IMR-90 (cell line): ENCODE measurements at regions of chr6 and their contacts with region 1.

Region 1: DNA sequence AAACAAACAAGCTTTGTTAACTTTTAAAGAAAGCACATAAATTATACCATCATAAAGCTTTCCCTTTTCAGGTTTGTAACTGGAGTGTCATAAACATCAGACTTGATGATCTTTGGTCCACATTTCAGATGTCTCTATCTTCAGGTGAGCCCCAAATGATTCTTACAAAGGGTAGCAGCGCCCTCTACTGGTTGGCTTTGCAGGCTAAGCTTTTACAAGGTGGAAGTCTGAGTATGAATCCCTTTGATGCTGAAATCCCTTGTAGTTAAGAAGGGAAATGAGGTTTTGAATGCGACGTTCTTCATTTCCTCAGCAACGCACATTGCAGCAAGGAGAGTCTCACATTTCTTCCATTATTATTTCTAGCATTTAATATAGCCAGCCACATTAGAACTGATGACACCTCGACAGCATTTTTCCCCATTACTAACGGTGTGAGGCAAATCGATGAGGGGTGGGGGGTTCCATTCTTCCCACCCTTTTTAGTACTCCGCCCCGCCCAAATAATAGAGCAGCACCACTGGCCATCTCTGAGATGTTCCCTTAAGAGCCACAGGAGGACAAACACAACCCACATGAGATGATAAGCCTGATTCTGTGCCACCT is 126.3 kb upstream of the NT5E start:
- DNase-seq: peak; percentile 77
- ATAC-seq: peak; percentile 89
- H3K4me3 ChIP-seq: no peak overlapping the region
- H3K27ac ChIP-seq: no peak overlapping the region
- H3K4me1 ChIP-seq: no peaks in the 10 kb centered on the region
- H3K27me3 ChIP-seq: peaks cover 11% of the 10 kb centered on the region
- CTCF ChIP-seq: peak; percentile 89
- POLR2A ChIP-seq: no peak
- RAD21 ChIP-seq: peak; percentile 83

Region 2: GRCh38 chr6:83884523-83884922 is 1439.0 kb before region 1 on chr6:
- CTCF ChIA-PET with region 1: no interaction called
- POLR2A ChIA-PET with region 1: no interaction called
- dilution Hi-C with region 1: no loop called
- in situ Hi-C with region 1: loop called (anchors 25 kb)
- intact Hi-C with region 1: loop called (anchors 10 kb)
- DNase-seq: peak; percentile 58
- ATAC-seq: peak; percentile 75
- H3K4me3 ChIP-seq: no peak overlapping the region
- H3K27ac ChIP-seq: no peak overlapping the region
- H3K4me1 ChIP-seq: no peaks in the 10 kb centered on the region
- H3K27me3 ChIP-seq: no peaks in the 10 kb centered on the region
- CTCF ChIP-seq: peak; percentile 76
- POLR2A ChIP-seq: no peak
- RAD21 ChIP-seq: peak; percentile 83

Region 3: GRCh38 chr6:84284428-84285049 is 1039.0 kb before region 1 on chr6:
- CTCF ChIA-PET with region 1: no interaction called
- POLR2A ChIA-PET with region 1: no interaction called
- dilution Hi-C with region 1: no loop called
- in situ Hi-C with region 1: no loop called
- intact Hi-C with region 1: loop called (anchors 2 kb)
- DNase-seq: peak; percentile 2
- ATAC-seq: peak; percentile 29; the same call in 1 of the 2 replicates
- H3K4me3 ChIP-seq: no peak overlapping the region
- H3K27ac ChIP-seq: no peak overlapping the region
- H3K4me1 ChIP-seq: no peaks in the 10 kb centered on the region
- H3K27me3 ChIP-seq: no peaks in the 10 kb centered on the region
- CTCF ChIP-seq: peak; percentile 34
- POLR2A ChIP-seq: no peak
- RAD21 ChIP-seq: peak; percentile 44

Region 4: DNA sequence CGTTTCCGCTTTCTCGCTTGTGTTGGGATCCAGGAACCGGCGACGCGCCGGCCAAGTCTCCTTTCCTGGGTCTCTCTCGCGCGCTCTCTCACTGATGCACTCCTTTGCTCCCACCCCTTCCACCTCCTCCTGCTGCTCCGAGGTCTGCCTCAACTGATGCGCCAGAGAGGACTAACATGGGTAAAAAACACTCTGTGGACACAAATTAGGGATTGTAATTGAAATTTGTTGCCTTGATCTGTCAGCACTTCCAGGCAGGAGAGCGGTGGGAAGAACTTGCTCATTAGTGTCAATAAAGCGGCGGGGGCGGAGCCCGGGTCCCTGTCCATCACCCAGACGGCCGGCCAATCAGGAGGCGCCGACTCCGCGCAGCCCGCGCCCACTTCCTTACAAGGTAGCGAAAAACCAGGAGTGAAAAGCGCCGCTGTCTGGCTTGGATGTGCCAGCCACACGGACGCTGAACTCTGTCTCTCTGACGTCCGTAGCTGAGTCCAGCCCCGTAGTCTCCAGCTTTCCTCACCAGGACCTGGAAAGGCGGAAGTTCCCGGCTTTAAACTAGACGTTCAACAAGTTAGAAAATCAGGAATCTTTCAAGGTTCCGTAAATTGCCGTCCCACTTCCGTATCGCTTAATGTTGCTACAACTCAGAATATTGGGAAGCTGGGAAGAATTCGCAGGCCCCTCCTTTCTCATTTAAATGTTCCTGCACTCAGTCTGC is 559.0 kb before region 1 on chr6 and contains the start of gene TBX18:
- CTCF ChIA-PET with region 1: no interaction called
- POLR2A ChIA-PET with region 1: no interaction called
- dilution Hi-C with region 1: no loop called
- in situ Hi-C with region 1: no loop called
- intact Hi-C with region 1: loop called (anchors 10 kb)
- DNase-seq: peak; percentile 88
- ATAC-seq: peak; percentile 95
- H3K4me3 ChIP-seq: peak within 1 kb of the TSS; percentile 53
- H3K27ac ChIP-seq: no peak within 1 kb of the TSS
- H3K4me1 ChIP-seq: no peaks in the 10 kb centered on the region
- H3K27me3 ChIP-seq: peaks cover 65% of the 10 kb centered on the region
- CTCF ChIP-seq: no peak
- POLR2A ChIP-seq: no peak
- RAD21 ChIP-seq: no peak
- total RNA-seq, gene TBX18: 0.83 and 1.3 TPM in 2 replicates

Region 5: DNA sequence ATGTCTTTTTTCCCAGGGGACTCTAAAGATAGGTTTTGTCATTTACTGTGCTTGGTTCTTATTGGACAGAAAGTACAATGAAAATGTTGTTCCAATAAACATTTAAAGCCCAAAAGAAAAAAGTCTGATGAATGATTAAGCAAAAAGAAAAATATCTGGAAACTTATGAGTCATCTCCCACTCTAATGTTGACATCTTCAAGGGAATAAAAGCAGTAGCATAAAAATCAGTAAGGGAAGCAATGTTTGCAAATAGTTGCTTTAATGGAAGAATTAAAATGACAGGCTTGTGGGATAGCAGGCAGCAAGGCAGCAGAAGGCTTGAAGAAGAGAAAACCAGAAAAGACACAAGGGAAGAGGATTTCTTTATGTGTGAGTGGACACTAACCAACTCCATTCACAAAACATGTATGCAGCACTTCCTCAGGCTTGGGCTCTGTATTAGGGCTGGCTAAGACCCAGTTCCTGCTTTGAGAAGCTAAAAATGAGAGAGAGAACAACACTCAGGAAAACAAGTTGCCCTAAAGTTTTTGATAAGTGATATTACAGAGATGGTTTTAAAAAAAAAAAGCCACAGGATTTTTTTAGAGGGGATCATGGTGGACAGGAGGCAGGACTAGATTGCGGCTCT is 136.9 kb before region 1 on chr6:
- CTCF ChIA-PET with region 1: no interaction called
- POLR2A ChIA-PET with region 1: no interaction called
- dilution Hi-C with region 1: no loop called
- in situ Hi-C with region 1: no loop called
- intact Hi-C with region 1: no loop called
- DNase-seq: peak; percentile 15
- ATAC-seq: no peak; the same call in 1 of the 2 replicates
- H3K4me3 ChIP-seq: no peak overlapping the region
- H3K27ac ChIP-seq: peak overlapping the region; percentile 25; the same call in 1 of the 2 replicates
- H3K4me1 ChIP-seq: peaks cover 5% of the 10 kb centered on the region; the same call in 1 of the 2 replicates
- H3K27me3 ChIP-seq: no peaks in the 10 kb centered on the region
- CTCF ChIP-seq: no peak
- POLR2A ChIP-seq: no peak
- RAD21 ChIP-seq: no peak